ENCODE measurements at regions of chr16 and their contacts with region 1.

Region 1: GRCh38 chr16:74216319-74216718 is 80.3 kb upstream of the PSMD7 start:
- DNase-seq: no peak
- H3K27ac ChIP-seq: no peak overlapping the region
- CTCF ChIP-seq: no peak

Region 2: GRCh38 chr16:74201576-74201975 is 14.7 kb before region 1 on chr16:
- CTCF ChIA-PET with region 1: no interaction called
- POLR2A ChIA-PET with region 1: no interaction called
- DNase-seq: no peak
- H3K27ac ChIP-seq: no peak overlapping the region
- CTCF ChIP-seq: no peak

Region 3: GRCh38 chr16:74226338-74226954 is 10.1 kb after region 1 on chr16:
- CTCF ChIA-PET with region 1: interaction called, 13 read pairs
- POLR2A ChIA-PET with region 1: no interaction called
- DNase-seq: peak; percentile 26
- H3K27ac ChIP-seq: no peak overlapping the region
- CTCF ChIP-seq: peak; percentile 43